Activated naive CD4-positive, alpha-beta T cell treated with anti-CD3 and anti-CD28 coated beads, Interleukin-2, amount 10 ng/mL, durations not matched to agents 7 days and 5 days (primary cell): ENCODE measurements at regions of chr17 and their contacts with region 1.

Region 1: GRCh38 chr17:5065227-5065744 is 13.0 kb upstream of the ZFP3 start:
- DNase-seq: no peak
- H3K4me3 Mint-ChIP-seq: no peak overlapping the region
- H3K27ac Mint-ChIP-seq: no peak overlapping the region
- H3K4me1 Mint-ChIP-seq: peaks cover 7% of the 10 kb centered on the region
- H3K27me3 Mint-ChIP-seq: no peaks in the 10 kb centered on the region

Region 2: GRCh38 chr17:4948931-4949320 is 116.4 kb before region 1 on chr17:
- CTCF ChIA-PET with region 1: no interaction called
- DNase-seq: peak; percentile 85
- H3K4me3 Mint-ChIP-seq: peak overlapping the region; percentile 92
- H3K27ac Mint-ChIP-seq: peak overlapping the region; percentile 98
- H3K4me1 Mint-ChIP-seq: peaks cover 43% of the 10 kb centered on the region
- H3K27me3 Mint-ChIP-seq: no peaks in the 10 kb centered on the region

Region 3: GRCh38 chr17:4986951-4987766 is 78.1 kb before region 1 on chr17 and contains the start of gene CAMTA2:
- CTCF ChIA-PET with region 1: interaction called, 11 read pairs
- DNase-seq: peak; percentile 94
- H3K4me3 Mint-ChIP-seq: peak within 1 kb of the TSS; percentile 83
- H3K27ac Mint-ChIP-seq: peak within 1 kb of the TSS; percentile 93
- H3K4me1 Mint-ChIP-seq: peaks cover 45% of the 10 kb centered on the region
- H3K27me3 Mint-ChIP-seq: no peaks in the 10 kb centered on the region

Region 4: DNA sequence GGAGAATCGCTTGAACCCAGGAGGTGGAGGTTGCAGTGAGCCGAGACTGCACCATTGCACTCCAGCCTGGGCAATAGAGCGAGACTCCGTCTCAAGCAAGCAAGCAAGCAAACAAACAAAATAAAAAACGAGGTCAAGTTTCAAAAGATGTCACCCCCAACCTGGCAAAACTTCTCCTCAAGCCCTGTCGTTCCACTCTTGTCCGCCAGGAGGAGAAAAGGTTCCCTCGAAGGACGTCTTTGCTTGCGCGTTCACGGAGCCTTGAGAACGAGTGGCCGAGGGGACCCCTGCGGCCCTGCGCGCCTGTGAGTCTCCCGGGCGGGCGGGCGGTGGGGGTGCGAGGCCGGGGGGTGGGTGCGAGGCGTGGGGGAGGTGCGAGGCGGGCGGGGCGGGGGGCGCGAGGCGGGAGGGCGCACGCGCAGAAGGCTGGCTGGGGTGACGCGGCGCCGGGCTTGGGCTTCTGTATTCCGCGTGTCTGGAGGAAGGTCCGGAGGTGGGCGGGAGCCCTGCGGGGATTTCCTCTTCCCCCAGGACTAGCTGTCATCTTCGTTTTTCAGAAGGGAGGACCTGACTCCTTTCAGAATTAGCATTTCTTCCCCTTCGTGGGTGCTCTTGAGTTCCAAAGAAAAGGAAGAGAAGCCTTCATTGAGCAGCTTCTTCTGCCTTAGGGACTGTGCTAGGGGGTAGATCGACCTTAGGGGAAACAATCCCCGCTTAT is 33.8 kb before region 1 on chr17:
- CTCF ChIA-PET with region 1: interaction called, 21 read pairs
- DNase-seq: peak; percentile 90
- H3K4me3 Mint-ChIP-seq: peak overlapping the region; percentile 80
- H3K27ac Mint-ChIP-seq: peak overlapping the region; percentile 95
- H3K4me1 Mint-ChIP-seq: peaks cover 34% of the 10 kb centered on the region
- H3K27me3 Mint-ChIP-seq: peaks cover 24% of the 10 kb centered on the region

Region 5: DNA sequence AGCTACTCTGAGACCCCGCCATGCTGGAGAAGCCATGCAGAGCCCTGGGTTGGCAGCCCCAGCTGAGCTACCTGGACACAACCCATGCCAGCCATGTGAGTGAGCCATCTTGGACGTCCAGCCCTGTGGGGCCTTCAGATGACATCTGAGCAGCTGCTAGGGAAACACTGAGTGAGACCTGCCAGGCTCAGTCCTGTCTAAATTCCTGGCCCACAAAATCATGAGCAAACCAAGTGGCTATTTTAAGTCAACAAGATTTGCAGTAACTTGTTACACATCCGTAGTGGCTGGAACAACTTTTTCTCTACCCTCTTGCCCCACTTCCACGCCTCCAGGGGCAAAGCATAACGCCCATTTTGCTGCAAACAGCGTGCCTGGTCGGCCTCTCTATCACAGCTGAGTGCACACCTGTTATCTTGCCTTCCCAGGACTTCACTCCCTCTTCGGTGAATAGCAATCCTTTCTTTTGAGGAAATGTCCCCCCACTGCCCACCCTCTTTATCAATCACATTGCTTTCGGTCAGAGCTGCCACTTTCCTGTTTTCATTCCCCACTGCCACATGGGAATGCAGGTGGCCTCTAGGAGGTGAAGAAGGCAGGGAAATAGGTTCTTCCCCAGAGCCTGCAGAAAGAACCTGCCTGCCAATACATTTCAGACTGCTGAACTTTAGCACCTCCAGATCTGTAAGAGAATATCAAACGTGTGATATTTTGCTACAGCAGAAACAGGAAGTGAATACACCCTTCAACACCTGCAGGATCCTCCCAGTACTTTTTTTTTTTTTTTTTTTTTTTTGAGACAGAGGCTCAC is 176.8 kb after region 1 on chr17:
- CTCF ChIA-PET with region 1: no interaction called
- DNase-seq: no peak
- H3K4me3 Mint-ChIP-seq: peak overlapping the region; percentile 47
- H3K27ac Mint-ChIP-seq: peak overlapping the region; percentile 99
- H3K4me1 Mint-ChIP-seq: peaks cover 32% of the 10 kb centered on the region
- H3K27me3 Mint-ChIP-seq: peaks cover 3% of the 10 kb centered on the region